ENCODE measurements at regions of chr11 and their contacts with region 1.

Region 1: DNA sequence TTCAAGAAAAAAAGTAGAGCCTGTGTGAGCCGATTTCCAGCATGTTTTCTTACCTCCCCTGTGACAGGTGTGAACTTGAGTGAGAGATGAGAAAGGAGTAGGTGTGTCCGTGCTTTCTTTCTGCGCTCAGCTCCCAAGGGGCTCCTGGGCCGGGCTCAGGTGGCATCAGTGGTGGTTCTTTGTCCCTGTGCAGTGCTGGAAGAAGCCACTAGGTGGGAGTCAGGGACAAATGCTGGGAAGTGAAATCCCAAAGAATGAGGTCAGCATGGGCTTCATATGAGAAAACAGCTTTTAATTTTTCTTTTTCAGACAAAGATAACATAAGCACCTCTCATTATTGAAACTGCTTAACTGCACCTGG is 57.8 kb downstream of the PPFIBP2 start:
- DNase-seq: peak; percentile 66 to 74 (median 69)
- ATAC-seq: peak; percentile 60 to 66 (median 64)
- H3K4me3 ChIP-seq: no peak overlapping the region
- H3K27ac ChIP-seq: peak overlapping the region; percentile 74 to 84 (median 83)
- H3K4me1 ChIP-seq: peaks cover 0 to 51% (median 23%) of the 10 kb centered on the region in 4 donors
- H3K27me3 ChIP-seq: no peaks in the 10 kb centered on the region
- CTCF ChIP-seq: peak; percentile 92 to 96 (median 92)
- POLR2A ChIP-seq: no peak

Region 2: DNA sequence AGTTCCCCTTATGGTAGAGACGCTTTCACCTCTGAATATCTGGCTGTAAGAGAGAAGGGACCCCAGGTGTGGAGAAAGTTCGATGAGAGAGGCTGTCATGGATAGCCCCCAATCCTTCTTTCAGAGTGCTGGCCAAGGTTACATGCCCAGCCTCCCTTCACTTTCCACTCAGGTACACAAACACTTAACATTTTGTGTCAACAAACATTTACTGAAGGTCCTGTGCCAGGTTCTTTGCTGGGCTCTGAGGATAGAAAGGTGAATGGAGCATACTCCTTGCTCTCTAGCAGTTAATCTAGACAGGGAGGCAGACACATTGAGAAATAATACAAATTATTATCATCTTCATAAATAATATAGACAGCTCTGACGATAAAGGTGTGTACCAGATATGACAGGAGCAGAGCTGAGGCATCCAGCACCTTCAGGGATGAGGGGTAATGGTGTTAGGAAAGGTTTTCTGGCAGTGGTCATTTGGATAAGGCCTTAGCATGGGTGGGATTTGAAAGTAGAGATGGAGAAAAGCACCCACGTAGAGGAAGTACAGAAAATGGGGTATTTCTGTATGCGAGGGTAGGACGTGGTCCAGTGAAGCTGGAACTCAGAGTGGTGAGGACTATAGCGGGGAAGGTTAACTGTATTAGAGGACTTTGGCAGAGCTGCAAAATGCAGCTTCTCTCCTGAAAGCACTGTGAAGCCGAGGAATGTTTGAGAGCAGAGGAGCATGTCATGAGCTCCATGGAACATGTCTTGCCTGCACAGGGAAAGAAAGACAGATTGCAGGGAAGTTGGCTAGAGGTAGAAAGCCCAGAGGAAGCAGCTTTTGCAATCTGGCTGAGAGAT is 38.2 kb before region 1 on chr11:
- intact Hi-C with region 1: no loop called
- DNase-seq: no peak
- ATAC-seq: peak; percentile 42 to 64 (median 62)
- H3K4me3 ChIP-seq: no peak overlapping the region
- H3K27ac ChIP-seq: peak overlapping the region in 1 of 3 donors; percentile 7
- H3K4me1 ChIP-seq: peaks cover 0 to 31% (median 13%) of the 10 kb centered on the region in 4 donors
- H3K27me3 ChIP-seq: no peaks in the 10 kb centered on the region
- CTCF ChIP-seq: no peak
- POLR2A ChIP-seq: no peak

Region 3: GRCh38 chr11:7657306-7658025 is 85.8 kb after region 1 on chr11:
- intact Hi-C with region 1: loop called in 1 of 2 experiments (anchors 10 kb)
- DNase-seq: peak in 1 of 3 donors; percentile 31
- ATAC-seq: peak; percentile 78 to 89 (median 85)
- H3K4me3 ChIP-seq: no peak overlapping the region
- H3K27ac ChIP-seq: no peak overlapping the region
- H3K4me1 ChIP-seq: no peaks in the 10 kb centered on the region
- H3K27me3 ChIP-seq: no peaks in the 10 kb centered on the region
- CTCF ChIP-seq: peak; percentile 27 to 56 (median 41)
- POLR2A ChIP-seq: no peak

Region 4: GRCh38 chr11:7665473-7666291 is 94.1 kb after region 1 on chr11:
- intact Hi-C with region 1: loop called in 1 of 2 experiments (anchors 5 kb)
- DNase-seq: peak; percentile 86 to 87 (median 87)
- ATAC-seq: peak; percentile 99 to 100 (median 100)
- H3K4me3 ChIP-seq: no peak overlapping the region
- H3K27ac ChIP-seq: no peak overlapping the region
- H3K4me1 ChIP-seq: no peaks in the 10 kb centered on the region
- H3K27me3 ChIP-seq: no peaks in the 10 kb centered on the region
- CTCF ChIP-seq: peak; percentile 85 to 94 (median 91)
- POLR2A ChIP-seq: no peak